ENCODE measurements at regions of chr11 and their contacts with region 1.

Region 1: DNA sequence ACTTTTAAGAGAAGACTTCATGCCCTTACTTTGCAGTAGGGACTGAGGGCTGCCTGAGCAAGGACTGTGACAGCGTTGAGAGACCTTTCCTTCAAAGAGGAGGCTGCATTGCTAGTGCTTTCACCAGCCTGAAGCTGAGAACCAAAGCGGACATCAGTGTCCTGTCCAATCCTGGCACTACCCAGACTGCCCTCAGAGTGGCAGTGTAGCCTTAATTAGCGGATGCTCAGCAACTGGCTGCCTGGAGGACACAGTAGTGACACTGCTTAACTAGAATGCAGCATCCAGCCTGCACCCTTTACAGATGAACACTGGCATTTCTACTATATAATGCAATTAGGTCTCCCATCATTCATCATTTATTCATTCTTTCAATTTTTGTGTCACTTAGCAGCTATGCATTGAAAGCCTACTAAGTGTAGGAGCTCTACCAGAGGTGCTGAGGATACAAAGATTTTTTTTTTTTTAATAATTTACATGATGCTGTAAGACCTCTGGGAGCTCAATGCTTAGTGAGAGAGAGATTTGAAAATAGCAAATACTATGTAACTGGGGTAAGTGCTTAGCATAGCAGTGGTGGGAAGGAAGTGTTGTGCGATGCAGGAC is 36.9 kb upstream of the SLC36A4 start:
- DNase-seq: peak; percentile 61
- ATAC-seq: peak; percentile 98
- H3K4me3 ChIP-seq: no peak overlapping the region
- H3K27ac ChIP-seq: no peak overlapping the region
- H3K4me1 ChIP-seq: peaks cover 0 to 5% of the 10 kb centered on the region in 2 experiments; a peak in 1 of 4 replicates
- H3K27me3 ChIP-seq: peaks cover 21% of the 10 kb centered on the region; the same call in 1 of the 2 replicates
- CTCF ChIP-seq: peak; percentile 75 to 91 (median 89)
- POLR2A ChIP-seq: no peak
- RAD21 ChIP-seq: peak; percentile 92

Region 2: GRCh38 chr11:93256623-93257022 is 21.9 kb after region 1 on chr11:
- CTCF ChIA-PET with region 1: no interaction called
- POLR2A ChIA-PET with region 1: no interaction called
- RAD21 ChIA-PET with region 1: no interaction called
- intact Hi-C with region 1: no loop called
- DNase-seq: no peak
- ATAC-seq: no peak
- H3K4me3 ChIP-seq: no peak overlapping the region
- H3K27ac ChIP-seq: no peak overlapping the region
- H3K4me1 ChIP-seq: no peaks in the 10 kb centered on the region
- H3K27me3 ChIP-seq: no peaks in the 10 kb centered on the region
- CTCF ChIP-seq: no peak
- POLR2A ChIP-seq: no peak
- RAD21 ChIP-seq: no peak

Region 3: GRCh38 chr11:93543292-93543977 is 308.7 kb after region 1 on chr11 and contains the start of gene SMCO4:
- CTCF ChIA-PET with region 1: interaction called, 8 read pairs
- POLR2A ChIA-PET with region 1: no interaction called
- RAD21 ChIA-PET with region 1: no interaction called
- intact Hi-C with region 1: loop called (anchors 1 kb)
- DNase-seq: peak; percentile 58
- ATAC-seq: peak; percentile 88
- H3K4me3 ChIP-seq: peak within 1 kb of the TSS; percentile 74 to 89
- H3K27ac ChIP-seq: peak within 1 kb of the TSS; percentile 52
- H3K4me1 ChIP-seq: peaks cover 17 to 25% of the 10 kb centered on the region in 2 experiments
- H3K27me3 ChIP-seq: no peaks in the 10 kb centered on the region
- CTCF ChIP-seq: peak; percentile 44 to 67 (median 48)
- POLR2A ChIP-seq: no peak
- RAD21 ChIP-seq: peak; percentile 65
- total RNA-seq, gene SMCO4: 23.1 TPM

Region 4: GRCh38 chr11:93652161-93652597 is 417.5 kb after region 1 on chr11:
- CTCF ChIA-PET with region 1: interaction called, 27 read pairs
- POLR2A ChIA-PET with region 1: no interaction called
- RAD21 ChIA-PET with region 1: interaction called in 1 of 2 experiments, 3 read pairs
- intact Hi-C with region 1: loop called (anchors 1 kb)
- DNase-seq: no peak
- ATAC-seq: peak; percentile 57
- H3K4me3 ChIP-seq: no peak overlapping the region
- H3K27ac ChIP-seq: no peak overlapping the region
- H3K4me1 ChIP-seq: peaks cover 3 to 4% of the 10 kb centered on the region in 2 experiments; a peak in 3 of 4 replicates
- H3K27me3 ChIP-seq: peaks cover 8% of the 10 kb centered on the region; the same call in 1 of the 2 replicates
- CTCF ChIP-seq: peak; percentile 50 to 79 (median 55); a peak in 5 of 6 replicates
- POLR2A ChIP-seq: no peak
- RAD21 ChIP-seq: peak; percentile 67

Region 5: DNA sequence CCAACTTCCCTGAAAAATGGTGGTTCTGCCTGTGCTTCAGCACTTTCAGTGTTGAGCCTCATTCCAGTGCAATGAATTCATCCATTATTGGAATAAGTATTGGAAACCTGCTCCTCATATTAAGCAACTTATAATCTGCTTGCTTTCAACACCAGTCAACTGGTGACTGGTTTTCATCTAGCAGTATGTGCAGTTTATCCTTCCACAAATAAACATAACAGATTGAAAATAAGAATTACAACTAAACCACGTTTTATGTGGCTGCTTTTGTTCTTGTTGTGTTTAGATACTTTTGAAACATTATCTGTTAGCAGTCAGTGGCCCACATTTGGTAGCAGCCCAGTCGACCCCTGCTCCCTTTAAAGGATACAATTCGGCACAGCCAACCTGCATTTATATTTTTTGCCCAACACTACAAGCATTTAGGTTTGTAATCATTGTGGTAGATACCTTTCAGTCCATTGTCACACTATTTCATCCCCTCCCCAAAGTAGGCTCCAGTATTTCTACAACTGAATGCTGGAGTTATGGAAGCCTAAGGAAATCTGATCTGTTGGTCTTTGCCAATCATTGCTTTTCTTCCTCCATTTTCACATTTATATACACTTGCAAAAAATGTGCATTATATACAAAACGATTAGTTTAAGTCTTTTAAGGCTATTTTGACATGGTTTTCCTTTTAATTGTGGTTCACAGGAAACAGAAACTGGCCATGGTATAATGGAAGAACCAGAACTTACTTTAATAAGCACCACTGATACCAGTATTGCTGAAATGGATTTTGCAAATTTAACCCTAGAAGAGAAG is 493.5 kb after region 1 on chr11:
- CTCF ChIA-PET with region 1: no interaction called
- POLR2A ChIA-PET with region 1: no interaction called
- RAD21 ChIA-PET with region 1: no interaction called
- intact Hi-C with region 1: loop called (anchors 10 kb)
- DNase-seq: no peak
- ATAC-seq: peak; percentile 24; the same call in 1 of the 2 replicates
- H3K4me3 ChIP-seq: no peak overlapping the region
- H3K27ac ChIP-seq: 0 out of 2 replicates have a peak overlapping the region, but pooled peaks have one; percentile 11
- H3K4me1 ChIP-seq: no peaks in the 10 kb centered on the region
- H3K27me3 ChIP-seq: no peaks in the 10 kb centered on the region
- CTCF ChIP-seq: no peak
- POLR2A ChIP-seq: no peak
- RAD21 ChIP-seq: no peak